ENCODE measurements at regions of chr12 and their contacts with region 1.

Region 1: GRCh38 chr12:19675361-19675760 is 236.1 kb downstream of the AEBP2 start:
- DNase-seq: no peak
- H3K4me3 Mint-ChIP-seq: no peak overlapping the region
- H3K27ac Mint-ChIP-seq: no peak overlapping the region
- H3K4me1 Mint-ChIP-seq: peaks cover 31% of the 10 kb centered on the region
- H3K27me3 Mint-ChIP-seq: no peaks in the 10 kb centered on the region

Region 2: DNA sequence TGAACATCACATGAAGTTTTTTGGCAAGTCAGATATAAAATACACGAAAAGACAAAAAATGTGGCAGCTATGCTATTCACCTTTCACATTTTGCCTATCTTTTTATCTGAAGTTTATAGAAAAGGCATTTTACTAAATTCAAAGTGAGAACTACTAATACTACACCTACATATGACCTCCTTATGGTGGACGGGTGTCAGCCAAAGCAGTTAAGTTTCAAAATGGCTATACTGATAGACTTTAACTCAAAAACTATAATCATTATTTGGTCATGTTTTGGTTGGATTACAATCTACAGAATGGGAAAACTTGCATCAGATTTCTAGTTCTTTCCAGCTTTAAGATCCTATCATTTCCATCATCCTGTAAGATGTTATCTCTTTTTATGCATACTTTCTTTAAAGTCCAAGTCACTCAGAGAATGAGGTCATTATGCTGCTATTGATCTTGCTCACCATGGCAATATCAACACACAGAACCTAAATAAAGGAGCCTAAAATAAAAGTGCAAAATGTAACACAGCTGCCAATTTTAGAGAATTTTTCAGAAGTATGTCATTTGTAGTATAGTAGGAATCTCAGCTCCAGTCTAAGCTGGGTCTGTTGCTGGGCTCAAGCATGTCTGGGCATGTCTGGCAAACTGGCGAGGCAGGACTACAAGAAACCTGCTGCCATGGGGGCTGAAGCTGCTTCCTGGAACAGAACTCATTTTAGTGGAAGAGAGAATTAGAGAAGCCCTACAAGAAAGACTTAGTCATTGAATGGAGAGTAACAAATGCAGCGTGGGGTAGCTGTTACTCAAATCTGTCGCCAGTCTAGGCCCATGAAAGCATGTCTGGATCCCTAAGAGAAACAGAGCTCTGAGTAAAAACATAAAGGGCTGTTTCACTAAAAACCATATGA is 243.7 kb before region 1 on chr12:
- CTCF ChIA-PET with region 1: no interaction called
- intact Hi-C with region 1: loop called (anchors 1 kb)
- DNase-seq: peak; percentile 75
- H3K4me3 Mint-ChIP-seq: no peak overlapping the region
- H3K27ac Mint-ChIP-seq: peak overlapping the region; percentile 95
- H3K4me1 Mint-ChIP-seq: peaks cover 20% of the 10 kb centered on the region
- H3K27me3 Mint-ChIP-seq: no peaks in the 10 kb centered on the region

Region 3: DNA sequence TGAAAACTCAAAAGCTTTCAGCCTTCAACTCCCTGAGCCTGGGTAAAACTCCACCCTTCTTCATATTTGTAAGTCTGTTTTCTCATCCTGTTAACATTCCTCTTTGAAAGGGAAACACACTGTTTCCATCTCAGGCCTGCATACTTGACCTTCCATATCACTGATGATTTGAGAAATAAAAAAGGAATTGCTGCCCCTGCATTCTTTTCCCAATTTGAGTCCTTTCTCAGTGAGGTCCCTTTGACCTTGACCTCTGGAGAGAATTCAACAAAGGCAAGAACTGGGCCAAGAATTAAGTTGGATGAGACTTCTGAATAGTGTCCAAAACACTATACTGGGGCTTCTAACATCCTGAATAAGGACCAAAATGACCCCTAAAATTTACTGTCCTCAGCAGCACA is 128.1 kb before region 1 on chr12:
- CTCF ChIA-PET with region 1: no interaction called
- intact Hi-C with region 1: loop called (anchors 1 kb)
- DNase-seq: no peak
- H3K4me3 Mint-ChIP-seq: no peak overlapping the region
- H3K27ac Mint-ChIP-seq: no peak overlapping the region
- H3K4me1 Mint-ChIP-seq: peaks cover 5% of the 10 kb centered on the region
- H3K27me3 Mint-ChIP-seq: no peaks in the 10 kb centered on the region

Region 4: GRCh38 chr12:19893514-19893913 is 218.2 kb after region 1 on chr12:
- CTCF ChIA-PET with region 1: no interaction called
- intact Hi-C with region 1: loop called (anchors 1 kb)
- DNase-seq: no peak
- H3K4me3 Mint-ChIP-seq: no peak overlapping the region
- H3K27ac Mint-ChIP-seq: no peak overlapping the region
- H3K4me1 Mint-ChIP-seq: peaks cover 8% of the 10 kb centered on the region
- H3K27me3 Mint-ChIP-seq: peaks cover 2% of the 10 kb centered on the region